ENCODE measurements at regions of chr20 and their contacts with region 1.

Region 1: GRCh38 chr20:10553326-10553984 is 118.3 kb downstream of the SLX4IP start:
- DNase-seq: peak; percentile 51 to 60
- H3K4me3 ChIP-seq: no peak overlapping the region
- H3K27ac ChIP-seq: no peak overlapping the region
- H3K4me1 ChIP-seq: peaks cover 29% of the 10 kb centered on the region
- H3K27me3 ChIP-seq: no peaks in the 10 kb centered on the region
- CTCF ChIP-seq: peak; percentile 87

Region 2: GRCh38 chr20:10596726-10597125 is 43.3 kb after region 1 on chr20:
- CTCF ChIA-PET with region 1: no interaction called
- POLR2A ChIA-PET with region 1: interaction called, 4 read pairs
- intact Hi-C with region 1: loop called (anchors 2 kb)
- DNase-seq: no peak
- H3K4me3 ChIP-seq: no peak overlapping the region
- H3K27ac ChIP-seq: no peak overlapping the region
- H3K4me1 ChIP-seq: peaks cover 38% of the 10 kb centered on the region
- H3K27me3 ChIP-seq: no peaks in the 10 kb centered on the region
- CTCF ChIP-seq: no peak

Region 3: GRCh38 chr20:10654630-10655029 is 101.2 kb after region 1 on chr20:
- CTCF ChIA-PET with region 1: no interaction called
- POLR2A ChIA-PET with region 1: no interaction called
- intact Hi-C with region 1: loop called (anchors 5 kb)
- DNase-seq: no peak
- H3K4me3 ChIP-seq: no peak overlapping the region
- H3K27ac ChIP-seq: no peak overlapping the region
- H3K4me1 ChIP-seq: no peaks in the 10 kb centered on the region
- H3K27me3 ChIP-seq: no peaks in the 10 kb centered on the region
- CTCF ChIP-seq: no peak

Region 4: GRCh38 chr20:10812759-10813327 is 259.4 kb after region 1 on chr20:
- CTCF ChIA-PET with region 1: no interaction called
- POLR2A ChIA-PET with region 1: no interaction called
- intact Hi-C with region 1: no loop called
- DNase-seq: no peak
- H3K4me3 ChIP-seq: no peak overlapping the region
- H3K27ac ChIP-seq: no peak overlapping the region
- H3K4me1 ChIP-seq: no peaks in the 10 kb centered on the region
- H3K27me3 ChIP-seq: no peaks in the 10 kb centered on the region
- CTCF ChIP-seq: no peak

Region 5: GRCh38 chr20:10910535-10911178 is 357.2 kb after region 1 on chr20:
- CTCF ChIA-PET with region 1: no interaction called
- POLR2A ChIA-PET with region 1: no interaction called
- intact Hi-C with region 1: no loop called
- DNase-seq: no peak
- H3K4me3 ChIP-seq: no peak overlapping the region
- H3K27ac ChIP-seq: no peak overlapping the region
- H3K4me1 ChIP-seq: no peaks in the 10 kb centered on the region
- H3K27me3 ChIP-seq: no peaks in the 10 kb centered on the region
- CTCF ChIP-seq: no peak

Region 6: GRCh38 chr20:11267131-11267761 is 713.8 kb after region 1 on chr20:
- CTCF ChIA-PET with region 1: no interaction called
- POLR2A ChIA-PET with region 1: no interaction called
- intact Hi-C with region 1: loop called (anchors 2 kb)
- DNase-seq: peak; percentile 62 to 84
- H3K4me3 ChIP-seq: peak overlapping the region; percentile 19; the same call in 1 of the 2 replicates
- H3K27ac ChIP-seq: peak overlapping the region; percentile 61
- H3K4me1 ChIP-seq: peaks cover 21% of the 10 kb centered on the region
- H3K27me3 ChIP-seq: no peaks in the 10 kb centered on the region
- CTCF ChIP-seq: no peak

Region 7: GRCh38 chr20:11379257-11380011 is 826.0 kb after region 1 on chr20:
- CTCF ChIA-PET with region 1: no interaction called
- POLR2A ChIA-PET with region 1: no interaction called
- intact Hi-C with region 1: loop called (anchors 10 kb)
- DNase-seq: no peak
- H3K4me3 ChIP-seq: no peak overlapping the region
- H3K27ac ChIP-seq: no peak overlapping the region
- H3K4me1 ChIP-seq: peaks cover 16% of the 10 kb centered on the region
- H3K27me3 ChIP-seq: no peaks in the 10 kb centered on the region
- CTCF ChIP-seq: no peak